ENCODE measurements at regions of chr19 and their contacts with region 1.

Region 1: DNA sequence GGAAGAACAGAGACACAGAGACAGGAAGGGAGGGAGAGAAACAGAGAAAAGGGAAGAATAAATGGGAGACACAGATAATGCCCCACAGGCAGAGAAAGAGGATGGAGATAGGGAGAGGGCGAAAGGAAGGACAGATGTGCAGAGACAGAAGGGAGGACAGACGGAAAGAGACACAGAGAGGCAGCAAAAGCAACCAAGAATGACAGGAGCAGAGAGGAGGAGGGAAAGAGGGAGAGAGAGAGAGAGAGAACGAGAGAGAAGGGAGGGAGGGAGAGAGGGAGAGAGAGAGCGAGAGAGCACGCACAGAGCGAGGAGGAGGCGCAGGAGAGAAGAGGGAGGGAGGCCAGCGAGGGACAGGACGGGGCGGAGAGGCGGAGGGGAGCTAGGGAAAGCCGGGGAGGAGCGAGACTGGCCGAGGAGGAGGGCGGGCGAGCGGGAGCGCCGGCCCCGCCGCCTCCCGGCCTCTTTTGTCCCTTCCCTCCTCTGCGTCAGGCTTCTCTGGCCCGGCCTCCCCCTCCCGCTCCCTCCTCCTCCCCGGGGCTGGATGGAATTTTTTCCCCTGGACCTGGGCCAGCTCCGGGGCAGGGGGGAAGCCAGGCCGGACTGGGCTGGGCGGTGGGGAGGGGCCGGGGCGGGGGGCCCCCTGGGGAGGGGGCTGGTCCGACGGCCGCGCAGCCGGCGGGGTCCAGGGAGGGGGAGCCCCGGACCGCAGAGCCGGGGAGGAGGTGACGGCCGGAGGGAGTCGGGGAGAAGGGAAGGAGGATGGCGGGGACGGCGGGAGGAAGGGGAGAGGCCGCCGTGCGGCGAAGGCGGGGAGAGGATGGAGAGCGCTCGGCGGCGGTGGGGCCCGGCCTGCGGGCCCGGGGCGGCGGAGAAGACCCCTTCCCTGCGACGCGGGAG is 4.2 kb upstream of the SPACA6 start:
- DNase-seq: peak; percentile 82
- H3K4me3 ChIP-seq: peak overlapping the region; percentile 73 to 92 (median 77)
- H3K27ac ChIP-seq: peak overlapping the region; percentile 92 to 98 (median 96)
- H3K4me1 ChIP-seq: peaks cover 7 to 47% (median 19%) of the 10 kb centered on the region in 4 donors
- H3K27me3 ChIP-seq: peaks cover 33% of the 10 kb centered on the region
- CTCF ChIP-seq: peak in 1 of 5 experiments; percentile 12
- EP300 ChIP-seq: no peak
- POLR2A ChIP-seq: peak; percentile 22

Region 2: GRCh38 chr19:51372649-51373504 is 316.0 kb before region 1 on chr19 and contains the start of gene NKG7:
- in situ Hi-C with region 1: no loop called
- intact Hi-C with region 1: loop called (anchors 10 kb)
- DNase-seq: no peak
- H3K4me3 ChIP-seq: no peak within 1 kb of the TSS
- H3K27ac ChIP-seq: peak within 1 kb of the TSS; percentile 2 to 42 (median 18)
- H3K4me1 ChIP-seq: peaks cover 0 to 6% (median 3%) of the 10 kb centered on the region in 4 donors
- H3K27me3 ChIP-seq: no peaks in the 10 kb centered on the region
- CTCF ChIP-seq: no peak
- EP300 ChIP-seq: no peak
- POLR2A ChIP-seq: no peak
- total RNA-seq, gene NKG7: 1.6 to 3.0 TPM in 2 of 4 donors, not detected in the others

Region 3: DNA sequence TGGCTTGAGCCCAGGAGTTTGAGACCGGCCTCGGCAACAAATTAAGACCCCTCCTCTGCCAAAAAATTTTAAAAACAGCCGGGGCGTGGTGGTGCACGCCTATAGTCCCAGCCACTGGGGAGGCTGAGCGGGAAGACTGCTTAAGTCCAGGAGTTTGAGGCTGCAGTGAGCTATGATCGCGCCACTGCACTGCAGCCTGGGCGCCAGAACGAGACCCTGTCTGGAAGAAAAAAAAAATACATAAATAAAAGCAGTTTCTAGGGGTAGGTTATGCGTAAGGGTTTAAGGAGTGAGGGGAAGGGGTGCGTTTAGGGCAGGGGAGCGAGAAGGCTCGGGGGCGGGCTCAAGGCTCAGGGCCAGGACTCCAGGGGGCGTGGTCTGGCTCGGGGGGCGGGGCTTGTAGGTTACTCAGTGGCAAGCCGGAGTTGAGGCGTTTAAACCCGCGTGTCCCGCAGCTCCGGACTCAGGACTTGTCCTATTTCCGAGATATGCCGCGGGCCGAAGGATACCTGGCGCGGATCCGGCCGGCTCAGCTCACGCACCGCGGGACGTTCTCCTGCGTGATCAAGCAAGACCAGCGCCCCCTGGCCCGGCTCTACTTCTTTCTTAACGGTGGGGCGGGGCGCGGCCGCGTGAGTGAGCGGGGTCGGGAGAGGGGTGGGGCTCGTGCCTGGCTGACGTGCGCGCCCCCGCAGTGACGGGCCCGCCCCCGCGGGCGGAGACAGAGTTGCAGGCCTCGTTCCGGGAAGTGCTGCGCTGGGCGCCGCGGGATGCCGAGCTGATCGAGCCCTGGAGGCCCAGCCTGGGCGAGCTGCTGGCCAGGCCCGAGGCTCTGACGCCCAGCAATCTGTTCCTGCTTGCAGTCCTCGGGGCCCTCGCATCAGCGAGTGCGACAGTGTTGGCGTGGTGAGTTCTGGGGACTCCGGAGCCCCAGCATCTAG is 14.9 kb after region 1 on chr19:
- in situ Hi-C with region 1: no loop called
- intact Hi-C with region 1: loop called (anchors 2 kb)
- DNase-seq: peak; percentile 98
- H3K4me3 ChIP-seq: peak overlapping the region; percentile 54 to 81 (median 73)
- H3K27ac ChIP-seq: peak overlapping the region; percentile 89 to 95 (median 94)
- H3K4me1 ChIP-seq: peaks cover 13 to 36% (median 25%) of the 10 kb centered on the region in 4 donors
- H3K27me3 ChIP-seq: no peaks in the 10 kb centered on the region
- CTCF ChIP-seq: peak in 3 of 5 experiments; percentile 36 to 57 (median 41)
- EP300 ChIP-seq: peak; percentile 9
- POLR2A ChIP-seq: peak; percentile 85

Region 4: DNA sequence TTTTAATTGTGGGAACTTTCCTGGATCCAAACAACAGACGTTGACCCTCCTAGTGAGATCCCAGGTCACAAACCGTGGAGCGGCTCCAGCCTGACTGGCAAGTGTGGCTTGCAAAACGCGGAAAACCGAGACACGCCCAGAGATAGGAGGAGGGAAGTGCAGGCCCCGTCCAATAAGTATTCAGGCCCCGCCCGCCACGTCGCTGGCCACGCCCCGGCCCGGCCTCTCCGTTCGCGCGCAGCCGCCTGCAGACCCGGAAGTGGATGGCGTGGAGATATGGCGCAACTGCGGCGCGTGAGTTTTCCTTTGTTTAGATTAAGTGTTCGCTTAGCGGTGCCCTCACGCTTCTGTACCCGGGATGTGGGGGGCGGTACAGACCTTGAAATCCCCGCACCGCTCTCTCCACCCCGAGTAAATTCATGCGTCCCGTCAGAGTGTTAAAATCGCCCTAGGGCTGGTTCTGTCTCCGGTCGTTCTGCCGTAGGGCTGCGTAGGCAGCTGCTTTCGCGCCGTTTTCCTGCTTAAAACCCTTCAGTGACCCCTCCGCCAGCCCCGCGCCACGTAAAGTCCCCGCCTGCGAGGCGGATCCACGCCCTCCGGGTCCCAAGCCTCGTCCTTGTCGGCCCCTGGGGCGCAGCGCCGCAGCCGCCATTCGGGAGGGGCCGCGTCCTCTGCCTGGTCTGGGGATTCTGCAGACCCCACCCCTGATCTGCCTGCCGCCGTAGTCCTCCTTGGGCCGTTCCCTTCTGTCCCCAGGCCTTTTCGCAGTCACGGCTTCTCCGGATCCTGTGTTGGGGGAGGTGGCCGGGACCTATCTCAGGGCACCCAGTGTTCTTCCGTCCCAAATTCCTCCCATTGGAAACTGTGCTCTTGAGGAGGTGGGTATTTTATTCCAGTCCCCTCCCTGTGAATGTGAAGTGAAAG is 580.7 kb after region 1 on chr19 and contains the start of gene ZNF766:
- in situ Hi-C with region 1: no loop called
- intact Hi-C with region 1: loop called (anchors 10 kb)
- DNase-seq: peak; percentile 98
- H3K4me3 ChIP-seq: peak within 1 kb of the TSS; percentile 40 to 94 (median 81)
- H3K27ac ChIP-seq: peak within 1 kb of the TSS; percentile 94 to 99 (median 96)
- H3K4me1 ChIP-seq: peaks cover 6 to 16% (median 12%) of the 10 kb centered on the region in 4 donors
- H3K27me3 ChIP-seq: no peaks in the 10 kb centered on the region
- CTCF ChIP-seq: peak in 2 of 5 experiments; percentile 13 to 14
- EP300 ChIP-seq: no peak
- POLR2A ChIP-seq: peak; percentile 86
- total RNA-seq, gene ZNF766: 1.1 to 34.2 (median 6.8) TPM

Measured in transverse colon (tissue), 4 donors.